CD4-positive, alpha-beta T cell (primary cell): ENCODE measurements at regions of chr2 and their contacts with region 1.

Region 1: GRCh38 chr2:67210430-67210829 is 186.7 kb upstream of the ETAA1 start:
- DNase-seq: no peak
- ATAC-seq: no peak
- H3K4me3 ChIP-seq: no peak overlapping the region
- H3K4me3 Mint-ChIP-seq: no peak overlapping the region
- H3K27ac ChIP-seq: no peak overlapping the region
- H3K27ac Mint-ChIP-seq: no peak overlapping the region
- H3K4me1 ChIP-seq: no peaks in the 10 kb centered on the region
- H3K4me1 Mint-ChIP-seq: no peaks in the 10 kb centered on the region
- H3K27me3 ChIP-seq: no peaks in the 10 kb centered on the region
- H3K27me3 Mint-ChIP-seq: peaks cover 1% of the 10 kb centered on the region
- CTCF ChIP-seq: no peak

Region 2: GRCh38 chr2:67340133-67341011 is 129.9 kb after region 1 on chr2:
- CTCF ChIA-PET with region 1: no interaction called
- POLR2A ChIA-PET with region 1: no interaction called
- intact Hi-C with region 1: no loop called
- DNase-seq: no peak
- ATAC-seq: no peak
- H3K4me3 ChIP-seq: no peak overlapping the region
- H3K4me3 Mint-ChIP-seq: no peak overlapping the region
- H3K27ac ChIP-seq: no peak overlapping the region
- H3K27ac Mint-ChIP-seq: no peak overlapping the region
- H3K4me1 ChIP-seq: no peaks in the 10 kb centered on the region
- H3K4me1 Mint-ChIP-seq: no peaks in the 10 kb centered on the region
- H3K27me3 ChIP-seq: peaks cover 0 to 2% of the 10 kb centered on the region in 2 experiments
- H3K27me3 Mint-ChIP-seq: peaks cover 7% of the 10 kb centered on the region
- CTCF ChIP-seq: no peak

Region 3: DNA sequence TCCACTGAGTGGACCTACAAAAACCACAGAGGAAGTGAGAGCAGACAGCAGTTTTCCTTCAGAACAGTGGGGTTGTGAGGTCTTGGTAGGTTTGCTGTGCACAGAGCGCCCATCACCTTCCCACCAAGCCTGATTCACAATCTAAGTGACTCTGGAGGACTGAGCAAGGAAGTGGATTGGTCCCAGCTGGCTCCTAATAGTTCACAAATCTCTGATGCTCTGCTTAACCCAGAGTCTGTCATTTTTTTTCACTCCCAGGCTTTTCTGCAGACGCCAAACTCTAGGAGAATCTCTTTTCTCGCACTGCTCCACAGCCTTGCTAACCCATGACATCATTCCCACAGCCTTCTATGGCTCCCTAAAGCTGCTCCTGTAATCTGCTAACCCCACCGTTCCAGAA is 572.0 kb after region 1 on chr2:
- CTCF ChIA-PET with region 1: no interaction called
- POLR2A ChIA-PET with region 1: no interaction called
- intact Hi-C with region 1: loop called in 1 of 2 experiments (anchors 5 kb)
- DNase-seq: no peak
- ATAC-seq: no peak
- H3K4me3 ChIP-seq: no peak overlapping the region
- H3K4me3 Mint-ChIP-seq: no peak overlapping the region
- H3K27ac ChIP-seq: no peak overlapping the region
- H3K27ac Mint-ChIP-seq: no peak overlapping the region
- H3K4me1 ChIP-seq: no peaks in the 10 kb centered on the region
- H3K4me1 Mint-ChIP-seq: no peaks in the 10 kb centered on the region
- H3K27me3 ChIP-seq: no peaks in the 10 kb centered on the region
- H3K27me3 Mint-ChIP-seq: peaks cover 10% of the 10 kb centered on the region
- CTCF ChIP-seq: no peak